ENCODE measurements at regions of chr15 and their contacts with region 1.

Region 1: GRCh38 chr15:81010086-81010485 is 9.4 kb downstream of the TLNRD1 start:
- DNase-seq: no peak
- ATAC-seq: no peak
- H3K4me3 ChIP-seq: no peak overlapping the region
- H3K27ac ChIP-seq: no peak overlapping the region
- H3K4me1 ChIP-seq: peaks cover 8% of the 10 kb centered on the region
- H3K27me3 ChIP-seq: no peaks in the 10 kb centered on the region
- CTCF ChIP-seq: no peak

Region 2: DNA sequence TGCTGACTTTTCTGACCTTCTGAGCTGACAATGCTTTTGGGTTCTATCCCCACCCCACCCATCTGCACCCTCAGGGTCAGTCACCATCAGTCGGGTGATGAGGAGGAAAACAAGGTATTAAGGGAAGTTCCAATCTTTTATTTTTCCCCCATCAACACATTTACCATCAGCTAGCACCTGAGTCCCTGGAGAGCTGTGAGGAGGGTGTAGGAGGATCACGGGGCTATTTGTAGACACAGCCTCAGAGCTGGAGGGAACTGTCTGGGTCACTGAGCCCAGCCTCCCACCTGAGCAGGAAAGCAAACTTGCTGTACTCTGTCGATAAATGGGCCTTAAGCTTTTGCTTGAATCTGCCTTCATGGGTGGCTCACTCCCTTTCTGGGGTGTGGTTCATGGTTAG is 975.5 kb before region 1 on chr15:
- CTCF ChIA-PET with region 1: no interaction called
- POLR2A ChIA-PET with region 1: interaction called, 11 read pairs
- in situ Hi-C with region 1: no loop called
- intact Hi-C with region 1: no loop called
- DNase-seq: no peak
- ATAC-seq: no peak
- H3K4me3 ChIP-seq: no peak overlapping the region
- H3K27ac ChIP-seq: peak overlapping the region; percentile 58
- H3K4me1 ChIP-seq: peaks cover 19% of the 10 kb centered on the region
- H3K27me3 ChIP-seq: no peaks in the 10 kb centered on the region
- CTCF ChIP-seq: no peak

Region 3: GRCh38 chr15:80989518-80990478 is 20.3 kb before region 1 on chr15 and contains the start of gene MESD:
- CTCF ChIA-PET with region 1: no interaction called
- POLR2A ChIA-PET with region 1: no interaction called
- in situ Hi-C with region 1: no loop called
- intact Hi-C with region 1: no loop called
- DNase-seq: peak; percentile 71
- ATAC-seq: peak; percentile 100
- H3K4me3 ChIP-seq: peak within 1 kb of the TSS; percentile 98 to 99
- H3K27ac ChIP-seq: peak within 1 kb of the TSS; percentile 98
- H3K4me1 ChIP-seq: peaks cover 17% of the 10 kb centered on the region
- H3K27me3 ChIP-seq: no peaks in the 10 kb centered on the region
- CTCF ChIP-seq: no peak
- total RNA-seq, gene MESD: 28.2 TPM

Region 4: DNA sequence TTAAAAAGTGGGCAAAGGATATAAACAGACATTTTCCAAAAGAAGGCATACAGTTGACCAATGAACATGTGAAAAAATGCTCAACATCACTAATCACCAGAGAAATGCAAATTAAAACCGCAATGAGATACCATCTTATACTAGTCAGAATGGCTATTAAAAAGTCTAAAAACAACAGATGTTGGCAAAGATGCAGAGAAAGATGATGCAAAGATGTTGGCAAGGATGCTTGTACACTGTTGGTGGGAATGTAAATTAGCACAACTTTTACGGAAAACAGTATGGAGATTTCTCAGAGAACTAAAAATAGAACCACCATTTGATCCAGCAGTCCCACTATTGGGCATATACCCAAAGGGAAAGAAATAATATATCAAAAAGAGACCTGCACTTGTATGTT is 44.1 kb after region 1 on chr15:
- CTCF ChIA-PET with region 1: no interaction called
- POLR2A ChIA-PET with region 1: no interaction called
- in situ Hi-C with region 1: no loop called
- intact Hi-C with region 1: no loop called
- DNase-seq: no peak
- ATAC-seq: no peak
- H3K4me3 ChIP-seq: no peak overlapping the region
- H3K27ac ChIP-seq: no peak overlapping the region
- H3K4me1 ChIP-seq: no peaks in the 10 kb centered on the region
- H3K27me3 ChIP-seq: no peaks in the 10 kb centered on the region
- CTCF ChIP-seq: no peak

Region 5: GRCh38 chr15:81284256-81285031 is 274.4 kb after region 1 on chr15:
- CTCF ChIA-PET with region 1: no interaction called
- POLR2A ChIA-PET with region 1: no interaction called
- in situ Hi-C with region 1: no loop called
- intact Hi-C with region 1: no loop called
- DNase-seq: no peak
- ATAC-seq: no peak
- H3K4me3 ChIP-seq: no peak overlapping the region
- H3K27ac ChIP-seq: no peak overlapping the region
- H3K4me1 ChIP-seq: no peaks in the 10 kb centered on the region
- H3K27me3 ChIP-seq: 0 out of 2 replicates have a peak, but pooled peaks cover 3% of the 10 kb centered on the region
- CTCF ChIP-seq: no peak